K562 (cell line): ENCODE measurements at regions of chr1 and their contacts with region 1.

Region 1: GRCh38 chr1:186337554-186337953 is 37.5 kb downstream of the TPR start:
- DNase-seq: no peak
- ATAC-seq: no peak
- H3K4me3 ChIP-seq: no peak overlapping the region
- H3K27ac ChIP-seq: no peak overlapping the region
- H3K4me1 ChIP-seq: no peaks in the 10 kb centered on the region
- H3K27me3 ChIP-seq: no peaks in the 10 kb centered on the region
- CTCF ChIP-seq: no peak
- EP300 ChIP-seq: no peak
- POLR2A ChIP-seq: no peak
- RAD21 ChIP-seq: no peak

Region 2: GRCh38 chr1:186363891-186364290 is 26.3 kb after region 1 on chr1:
- CTCF ChIA-PET with region 1: no interaction called
- POLR2A ChIA-PET with region 1: interaction called, 3 read pairs
- in situ Hi-C with region 1: no loop called
- intact Hi-C with region 1: loop called (anchors 2 kb)
- DNase-seq: no peak
- ATAC-seq: no peak
- H3K4me3 ChIP-seq: no peak overlapping the region
- H3K27ac ChIP-seq: no peak overlapping the region
- H3K4me1 ChIP-seq: no peaks in the 10 kb centered on the region
- H3K27me3 ChIP-seq: no peaks in the 10 kb centered on the region
- CTCF ChIP-seq: no peak
- EP300 ChIP-seq: no peak
- POLR2A ChIP-seq: no peak
- RAD21 ChIP-seq: no peak

Region 3: DNA sequence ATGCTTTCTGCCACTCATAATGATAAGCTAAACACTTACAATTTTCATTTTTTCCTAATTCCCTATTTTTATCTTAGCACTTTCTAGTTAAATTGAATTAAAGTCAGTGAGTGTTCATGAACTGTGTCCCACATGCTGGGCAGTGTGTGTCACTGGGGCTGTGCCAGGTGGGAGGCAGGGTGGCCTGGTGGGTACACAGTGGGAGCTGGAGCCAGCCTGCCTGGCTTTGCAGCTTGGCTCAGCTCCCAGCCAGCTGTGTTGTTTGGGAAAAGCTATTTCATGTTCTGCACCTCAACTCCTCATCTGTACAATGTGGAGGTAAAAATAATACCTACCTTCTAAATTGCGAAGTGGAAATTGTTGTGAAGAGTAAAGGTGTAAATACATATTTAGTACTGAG is 729.6 kb after region 1 on chr1:
- CTCF ChIA-PET with region 1: no interaction called
- POLR2A ChIA-PET with region 1: no interaction called
- in situ Hi-C with region 1: loop called (anchors 5 kb)
- intact Hi-C with region 1: no loop called
- DNase-seq: no peak
- ATAC-seq: no peak
- H3K4me3 ChIP-seq: no peak overlapping the region
- H3K27ac ChIP-seq: no peak overlapping the region
- H3K4me1 ChIP-seq: no peaks in the 10 kb centered on the region
- H3K27me3 ChIP-seq: no peaks in the 10 kb centered on the region
- CTCF ChIP-seq: no peak
- EP300 ChIP-seq: no peak
- POLR2A ChIP-seq: no peak
- RAD21 ChIP-seq: no peak